GM12878 (cell line): ENCODE measurements at regions of chr10 and their contacts with region 1.

Region 1: GRCh38 chr10:62244780-62245467 is 23.7 kb downstream of the RTKN2 start:
- DNase-seq: peak; percentile 75
- ATAC-seq: peak; percentile 74
- H3K4me3 ChIP-seq: no peak overlapping the region
- H3K27ac ChIP-seq: peak overlapping the region; percentile 83; the same call in 1 of the 2 replicates
- H3K4me1 ChIP-seq: peaks cover 12% of the 10 kb centered on the region; the same call in 1 of the 2 replicates
- H3K27me3 ChIP-seq: no peaks in the 10 kb centered on the region
- CTCF ChIP-seq: peak; percentile 77 to 90 (median 78)
- EP300 ChIP-seq: no peak
- POLR2A ChIP-seq: no peak
- RAD21 ChIP-seq: peak; percentile 99

Region 2: DNA sequence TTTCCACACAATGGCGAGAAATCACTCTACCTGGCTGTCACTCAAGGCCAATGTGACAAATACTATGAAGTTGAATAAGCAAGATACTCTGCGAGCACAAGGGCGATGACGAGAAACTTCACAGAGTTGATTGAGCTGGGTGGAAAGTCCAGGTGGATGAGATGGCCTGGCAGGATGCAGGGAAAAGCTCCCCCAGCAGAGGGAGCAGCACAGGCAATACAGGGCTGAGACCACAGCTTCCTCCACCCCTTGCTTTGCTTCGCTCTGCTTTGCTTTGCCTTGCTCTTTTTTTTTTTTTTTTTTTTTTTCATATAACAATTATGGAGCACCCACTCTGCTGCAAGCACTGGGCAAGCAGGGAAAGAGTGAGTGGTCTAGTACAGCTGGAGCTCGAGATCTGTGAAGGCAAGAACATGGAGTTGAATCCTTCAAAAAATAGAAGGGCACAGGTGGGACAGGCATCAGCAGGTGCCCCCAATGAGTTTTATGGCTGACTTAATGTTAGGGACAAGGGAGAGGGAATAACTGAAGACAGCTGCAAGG is 493.9 kb before region 1 on chr10:
- CTCF ChIA-PET with region 1: interaction called, 23 read pairs
- POLR2A ChIA-PET with region 1: no interaction called
- RAD21 ChIA-PET with region 1: interaction called, 13 read pairs
- SMC1A ChIA-PET with region 1: interaction called, 14 read pairs
- in situ Hi-C with region 1: no loop called
- intact Hi-C with region 1: loop called (anchors 1 kb)
- DNase-seq: peak; percentile 27
- ATAC-seq: peak; percentile 98
- H3K4me3 ChIP-seq: no peak overlapping the region
- H3K27ac ChIP-seq: no peak overlapping the region
- H3K4me1 ChIP-seq: peaks cover 13% of the 10 kb centered on the region
- H3K27me3 ChIP-seq: no peaks in the 10 kb centered on the region
- CTCF ChIP-seq: peak; percentile 79 to 87 (median 83)
- EP300 ChIP-seq: no peak
- POLR2A ChIP-seq: no peak
- RAD21 ChIP-seq: peak; percentile 68

Region 3: GRCh38 chr10:61903221-61903927 is 341.6 kb before region 1 on chr10:
- CTCF ChIA-PET with region 1: interaction called, 86 read pairs
- POLR2A ChIA-PET with region 1: no interaction called
- RAD21 ChIA-PET with region 1: interaction called, 19 read pairs
- SMC1A ChIA-PET with region 1: interaction called, 42 read pairs
- in situ Hi-C with region 1: loop called (anchors 5 kb)
- intact Hi-C with region 1: loop called (anchors 1 kb)
- DNase-seq: peak; percentile 53
- ATAC-seq: peak; percentile 65
- H3K4me3 ChIP-seq: peak overlapping the region; percentile 85
- H3K27ac ChIP-seq: peak overlapping the region; percentile 96
- H3K4me1 ChIP-seq: peaks cover 20% of the 10 kb centered on the region
- H3K27me3 ChIP-seq: no peaks in the 10 kb centered on the region
- CTCF ChIP-seq: peak; percentile 0 to 17 (median 12); a peak in 3 of 6 replicates
- EP300 ChIP-seq: peak; percentile 48 to 69; a peak in 2 of 4 replicates
- POLR2A ChIP-seq: peak; percentile 76
- RAD21 ChIP-seq: no peak

Region 4: GRCh38 chr10:62025901-62026879 is 218.7 kb before region 1 on chr10:
- CTCF ChIA-PET with region 1: interaction called, 10 read pairs
- POLR2A ChIA-PET with region 1: no interaction called
- RAD21 ChIA-PET with region 1: no interaction called
- SMC1A ChIA-PET with region 1: interaction called, 3 read pairs
- in situ Hi-C with region 1: no loop called
- intact Hi-C with region 1: no loop called
- DNase-seq: no peak
- ATAC-seq: peak; percentile 35
- H3K4me3 ChIP-seq: no peak overlapping the region
- H3K27ac ChIP-seq: peak overlapping the region; percentile 11; the same call in 1 of the 2 replicates
- H3K4me1 ChIP-seq: peaks cover 26% of the 10 kb centered on the region
- H3K27me3 ChIP-seq: no peaks in the 10 kb centered on the region
- CTCF ChIP-seq: no peak
- EP300 ChIP-seq: no peak
- POLR2A ChIP-seq: no peak
- RAD21 ChIP-seq: no peak

Region 5: GRCh38 chr10:62050893-62051433 is 194.0 kb before region 1 on chr10:
- CTCF ChIA-PET with region 1: interaction called, 22 read pairs
- POLR2A ChIA-PET with region 1: no interaction called
- RAD21 ChIA-PET with region 1: interaction called, 5 read pairs
- SMC1A ChIA-PET with region 1: interaction called, 11 read pairs
- in situ Hi-C with region 1: loop called (anchors 5 kb)
- intact Hi-C with region 1: no loop called
- DNase-seq: peak; percentile 67
- ATAC-seq: peak; percentile 57
- H3K4me3 ChIP-seq: peak overlapping the region; percentile 68
- H3K27ac ChIP-seq: peak overlapping the region; percentile 93
- H3K4me1 ChIP-seq: peaks cover 59% of the 10 kb centered on the region
- H3K27me3 ChIP-seq: no peaks in the 10 kb centered on the region
- CTCF ChIP-seq: no peak
- EP300 ChIP-seq: peak; percentile 91; a peak in 3 of 4 replicates
- POLR2A ChIP-seq: peak; percentile 45; the same call in 1 of the 2 replicates
- RAD21 ChIP-seq: no peak

Region 6: GRCh38 chr10:62183442-62183841 is 61.5 kb before region 1 on chr10:
- CTCF ChIA-PET with region 1: no interaction called
- POLR2A ChIA-PET with region 1: no interaction called
- RAD21 ChIA-PET with region 1: no interaction called
- SMC1A ChIA-PET with region 1: interaction called, 3 read pairs
- in situ Hi-C with region 1: no loop called
- intact Hi-C with region 1: loop called (anchors 5 kb)
- DNase-seq: peak; percentile 50
- ATAC-seq: peak; percentile 90
- H3K4me3 ChIP-seq: no peak overlapping the region
- H3K27ac ChIP-seq: no peak overlapping the region
- H3K4me1 ChIP-seq: peaks cover 7% of the 10 kb centered on the region
- H3K27me3 ChIP-seq: no peaks in the 10 kb centered on the region
- CTCF ChIP-seq: no peak
- EP300 ChIP-seq: peak in 1 of 2 experiments; percentile 37; a peak in 1 of 4 replicates
- POLR2A ChIP-seq: no peak
- RAD21 ChIP-seq: no peak

Region 7: DNA sequence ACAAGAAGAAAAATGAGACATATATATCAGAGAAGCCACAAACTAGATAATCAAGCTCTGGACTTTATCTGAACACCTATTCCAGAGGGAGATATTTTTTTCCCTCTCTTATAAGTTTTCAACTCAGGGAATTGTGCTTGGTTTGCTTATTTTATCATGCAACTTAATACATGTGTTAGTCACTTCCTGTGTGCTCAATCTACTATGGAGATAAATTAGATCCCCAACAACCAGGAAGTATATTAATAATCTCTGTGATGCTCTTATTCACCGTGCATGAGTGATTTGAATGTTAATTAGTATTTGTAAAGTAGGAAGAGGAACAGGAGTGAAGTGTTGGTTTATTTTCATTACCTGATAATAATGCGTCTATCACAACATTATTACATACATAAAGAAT is 90.4 kb after region 1 on chr10:
- CTCF ChIA-PET with region 1: no interaction called
- POLR2A ChIA-PET with region 1: no interaction called
- RAD21 ChIA-PET with region 1: no interaction called
- SMC1A ChIA-PET with region 1: no interaction called
- in situ Hi-C with region 1: no loop called
- intact Hi-C with region 1: no loop called
- DNase-seq: no peak
- ATAC-seq: no peak
- H3K4me3 ChIP-seq: no peak overlapping the region
- H3K27ac ChIP-seq: no peak overlapping the region
- H3K4me1 ChIP-seq: no peaks in the 10 kb centered on the region
- H3K27me3 ChIP-seq: no peaks in the 10 kb centered on the region
- CTCF ChIP-seq: no peak
- EP300 ChIP-seq: no peak
- POLR2A ChIP-seq: no peak
- RAD21 ChIP-seq: no peak